ENCODE measurements at regions of chr9 and their contacts with region 1.

Region 1: GRCh38 chr9:125143375-125144090 is at the start of gene SCAI:
- DNase-seq: peak; percentile 99
- ATAC-seq: peak; percentile 99
- total RNA-seq, gene SCAI: 7.2 to 7.7 TPM

Region 2: DNA sequence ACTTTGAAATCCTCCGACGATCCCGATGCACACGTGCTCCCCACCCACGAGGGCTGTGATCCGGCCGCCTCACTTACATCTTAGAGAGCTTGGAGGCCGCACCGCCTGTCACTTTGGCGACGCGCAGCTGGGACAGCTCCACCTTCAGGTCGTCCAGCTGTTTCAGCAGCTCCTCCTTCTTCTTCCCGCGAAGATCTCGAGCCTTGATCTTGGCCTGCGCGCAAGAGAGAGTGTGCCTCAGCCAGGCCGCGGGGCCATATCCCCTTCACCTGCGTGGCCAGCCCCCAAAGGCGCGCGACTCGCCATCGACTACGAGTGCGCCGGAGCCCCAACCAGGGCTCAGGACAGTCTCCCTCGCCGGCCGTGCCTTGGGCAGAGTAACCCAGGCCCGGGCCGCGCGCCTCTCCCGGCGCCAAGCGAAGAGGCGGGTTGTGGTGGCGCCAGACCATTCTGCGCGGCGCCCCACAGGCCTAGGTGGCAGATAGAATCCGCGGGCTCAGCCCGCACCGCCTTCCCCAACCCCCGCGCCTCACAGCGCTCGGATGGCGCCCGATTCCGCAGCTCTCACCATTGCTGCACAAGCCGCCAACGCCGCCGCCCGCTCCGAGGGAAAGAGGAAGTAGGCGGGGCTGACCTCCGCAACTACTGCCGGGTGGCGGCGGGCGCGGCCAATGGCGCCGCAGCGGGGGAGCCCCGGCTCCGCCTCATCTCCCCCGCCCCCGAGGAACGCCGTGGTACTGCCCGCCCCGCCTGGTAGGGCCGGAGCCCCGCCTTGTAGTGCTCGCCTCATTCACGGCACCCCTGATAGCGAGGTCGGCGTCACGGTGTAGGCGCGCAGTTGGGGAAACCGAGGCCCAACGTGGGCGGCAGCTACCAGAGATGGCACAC is 281.9 kb before region 1 on chr9 and contains the starts of genes ARPC5L and RPL35:
- intact Hi-C with region 1: loop called in 1 of 2 experiments (anchors 10 kb)
- DNase-seq: peak; percentile 95 to 97
- ATAC-seq: peak; percentile 96
- total RNA-seq, gene ARPC5L: 43.4 to 51.6 TPM
- total RNA-seq, gene RPL35: 771 to 811 TPM

Region 3: GRCh38 chr9:124940693-124941453 is 202.7 kb before region 1 on chr9 and contains the start of gene GOLGA1:
- intact Hi-C with region 1: loop called in 1 of 2 experiments (anchors 10 kb)
- DNase-seq: peak; percentile 96 to 98
- ATAC-seq: peak; percentile 91
- total RNA-seq, gene GOLGA1: 26.4 to 30.5 TPM

Measured in left colon (tissue), 2 donors.